ENCODE measurements at regions of chr16 and their contacts with region 1.

Region 1: DNA sequence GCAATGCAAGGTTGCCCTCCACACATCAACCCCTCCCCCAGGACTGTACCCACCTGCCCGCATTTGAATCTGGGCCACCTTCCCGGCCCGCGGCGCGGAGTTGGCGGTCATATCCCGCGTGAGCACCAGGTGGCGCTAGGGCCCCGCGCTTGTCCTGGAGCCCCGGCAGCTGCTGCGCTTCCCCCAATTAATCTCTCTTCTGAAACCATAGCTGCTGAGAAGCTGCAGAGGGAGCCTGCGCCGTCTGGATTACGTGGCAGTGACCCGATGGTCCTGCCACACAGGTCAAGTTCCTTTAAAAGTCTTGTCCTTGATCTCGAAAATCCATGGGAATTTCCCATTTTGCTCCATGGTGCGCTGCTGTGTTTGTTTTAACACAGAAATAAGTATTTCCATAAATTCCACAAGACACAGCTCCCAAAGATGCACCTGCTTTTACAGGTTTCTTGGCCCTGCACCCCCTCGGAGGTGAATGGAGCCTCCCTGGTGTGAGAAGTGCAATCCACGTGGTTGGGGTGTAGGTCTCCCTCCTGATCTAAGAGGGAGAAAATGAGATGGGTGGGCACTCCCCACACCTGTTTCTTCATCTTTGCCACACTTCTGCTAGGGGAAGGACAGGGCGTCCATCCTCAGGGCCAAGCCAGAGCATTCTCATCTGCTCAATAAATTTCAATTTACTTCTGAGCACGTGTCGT is 22.1 kb downstream of the COX4I1 start:
- DNase-seq: peak; percentile 94
- CTCF ChIP-seq: peak; percentile 95

Region 2: DNA sequence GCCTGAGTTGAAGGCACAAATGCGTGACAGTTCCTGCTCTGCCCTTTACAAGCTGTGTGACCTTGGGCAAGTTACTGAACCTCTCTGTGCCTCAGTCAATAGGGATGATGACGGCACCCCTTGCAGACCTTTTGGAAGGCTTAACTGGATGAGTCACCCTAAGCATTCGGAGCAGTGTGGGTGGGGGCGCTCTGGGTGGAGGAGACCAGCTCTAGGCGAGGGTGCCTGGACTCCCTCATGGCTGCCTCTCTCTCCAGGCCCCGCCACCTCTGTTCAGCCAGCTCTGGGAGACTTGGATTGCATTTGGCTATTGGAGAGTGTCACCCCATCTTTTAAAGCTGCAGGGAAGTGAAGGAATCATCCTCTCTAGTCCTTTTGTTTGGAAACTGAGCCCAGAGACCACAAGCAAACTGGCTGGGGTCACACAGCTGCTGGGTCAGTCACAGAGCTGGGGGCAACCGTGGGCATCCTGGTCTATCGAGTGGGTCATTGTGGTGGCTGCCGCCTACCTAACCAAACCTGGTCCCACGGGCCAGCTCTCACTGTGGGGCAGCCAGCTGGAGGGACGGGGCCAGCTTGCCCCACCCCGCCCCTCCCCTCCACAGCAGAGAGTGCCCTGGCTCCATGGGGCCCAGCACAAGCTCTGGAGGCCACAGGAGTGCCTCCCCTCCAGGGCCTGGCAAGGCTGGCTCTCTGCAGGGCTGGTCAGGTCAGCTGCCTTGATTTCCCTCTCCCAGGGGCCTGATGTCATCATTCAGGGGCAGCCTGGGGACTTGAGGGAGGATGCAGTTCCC is 228.7 kb before region 1 on chr16:
- in situ Hi-C with region 1: no loop called
- DNase-seq: no peak
- CTCF ChIP-seq: no peak

Region 3: GRCh38 chr16:85894266-85894665 is 72.7 kb after region 1 on chr16:
- in situ Hi-C with region 1: loop called (anchors 5 kb)
- DNase-seq: no peak
- CTCF ChIP-seq: peak; percentile 39

Region 4: DNA sequence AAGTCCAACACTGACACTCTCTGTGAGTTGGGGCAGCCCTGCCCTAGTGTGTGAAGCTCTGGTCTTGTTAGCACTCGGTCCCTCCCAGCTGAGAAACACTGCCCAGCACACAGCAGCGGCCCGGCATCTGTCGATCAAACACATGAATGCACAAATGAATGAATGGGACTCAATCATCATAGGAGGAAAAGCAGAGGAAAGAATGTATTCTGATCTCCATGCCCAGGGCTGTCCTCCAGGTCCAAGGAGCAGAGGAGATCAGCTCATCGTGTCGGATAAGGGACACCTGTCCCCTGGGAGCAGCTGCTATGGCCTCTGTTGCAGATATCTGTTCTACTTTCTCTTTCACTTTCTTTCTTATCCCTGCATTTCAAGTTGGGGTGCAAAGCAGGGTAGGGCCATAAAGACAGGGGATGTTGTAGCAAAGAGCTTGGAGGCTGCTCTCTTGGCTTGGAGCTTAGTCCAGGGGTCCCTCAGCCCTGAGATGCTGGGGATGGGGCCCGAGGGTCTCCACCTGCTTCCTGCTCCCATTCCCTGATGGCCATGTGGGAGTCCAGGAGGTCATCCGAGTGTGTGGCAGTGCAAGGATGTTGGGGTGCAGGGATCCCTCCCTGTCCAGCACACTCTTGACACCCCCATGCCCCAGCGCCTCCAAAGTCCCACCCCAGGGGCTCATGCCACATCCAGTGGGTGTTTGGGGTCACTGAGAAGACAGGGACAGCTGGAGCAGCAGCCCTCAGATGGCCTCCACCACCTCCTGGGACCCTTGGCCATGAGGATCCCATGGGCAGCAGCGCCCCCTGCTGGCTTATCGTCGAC is 165.6 kb after region 1 on chr16:
- in situ Hi-C with region 1: loop called (anchors 10 kb)
- DNase-seq: peak; percentile 84
- CTCF ChIP-seq: no peak

Region 5: DNA sequence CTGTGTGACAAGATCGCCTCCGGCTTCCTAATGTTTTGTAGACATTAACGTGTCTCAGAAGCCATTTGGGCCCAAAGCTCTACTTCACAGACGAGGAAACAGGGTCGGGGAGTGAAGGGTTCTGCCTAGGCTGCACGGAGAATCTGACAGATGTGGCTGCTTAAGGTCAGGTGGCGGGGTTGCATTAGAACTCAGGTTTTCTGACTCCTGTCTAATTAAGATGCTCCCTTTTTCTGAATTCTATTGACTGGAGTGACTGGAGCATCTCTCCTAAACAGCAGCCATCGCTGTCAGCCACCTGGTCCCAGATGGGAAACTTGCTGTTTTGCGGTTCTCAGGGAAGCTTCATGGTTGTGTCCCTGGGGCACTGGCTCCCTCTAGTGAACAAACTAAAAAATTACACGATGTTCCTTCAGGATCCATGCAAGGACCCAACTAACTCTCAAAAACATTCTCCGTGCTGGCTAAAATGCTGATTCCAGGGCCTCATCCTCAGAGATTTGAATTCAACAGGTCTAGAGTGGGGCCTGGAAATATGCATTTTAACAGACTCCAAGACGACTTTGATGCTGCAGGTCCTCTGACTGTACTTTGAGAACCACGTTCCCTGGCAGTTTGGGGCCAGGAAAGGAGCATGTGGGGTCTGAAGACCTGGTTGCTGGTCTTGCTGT is 194.7 kb after region 1 on chr16:
- in situ Hi-C with region 1: loop called (anchors 5 kb)
- DNase-seq: peak; percentile 78
- CTCF ChIP-seq: peak; percentile 59

Measured in GM13976 (cell line).